Mammary epithelial cell (primary cell): ENCODE measurements at regions of chr10 and their contacts with region 1.

Region 1: GRCh38 chr10:91745074-91745832 is 53.0 kb upstream of the TNKS2 start:
- DNase-seq: peak; percentile 55
- H3K4me3 ChIP-seq: peak overlapping the region in 2 of 3 experiments; percentile 21 to 34
- H3K27ac ChIP-seq: no peak overlapping the region
- H3K4me1 ChIP-seq: peaks cover 3% of the 10 kb centered on the region
- H3K27me3 ChIP-seq: peaks cover 3% of the 10 kb centered on the region
- CTCF ChIP-seq: peak; percentile 66 to 80

Region 2: DNA sequence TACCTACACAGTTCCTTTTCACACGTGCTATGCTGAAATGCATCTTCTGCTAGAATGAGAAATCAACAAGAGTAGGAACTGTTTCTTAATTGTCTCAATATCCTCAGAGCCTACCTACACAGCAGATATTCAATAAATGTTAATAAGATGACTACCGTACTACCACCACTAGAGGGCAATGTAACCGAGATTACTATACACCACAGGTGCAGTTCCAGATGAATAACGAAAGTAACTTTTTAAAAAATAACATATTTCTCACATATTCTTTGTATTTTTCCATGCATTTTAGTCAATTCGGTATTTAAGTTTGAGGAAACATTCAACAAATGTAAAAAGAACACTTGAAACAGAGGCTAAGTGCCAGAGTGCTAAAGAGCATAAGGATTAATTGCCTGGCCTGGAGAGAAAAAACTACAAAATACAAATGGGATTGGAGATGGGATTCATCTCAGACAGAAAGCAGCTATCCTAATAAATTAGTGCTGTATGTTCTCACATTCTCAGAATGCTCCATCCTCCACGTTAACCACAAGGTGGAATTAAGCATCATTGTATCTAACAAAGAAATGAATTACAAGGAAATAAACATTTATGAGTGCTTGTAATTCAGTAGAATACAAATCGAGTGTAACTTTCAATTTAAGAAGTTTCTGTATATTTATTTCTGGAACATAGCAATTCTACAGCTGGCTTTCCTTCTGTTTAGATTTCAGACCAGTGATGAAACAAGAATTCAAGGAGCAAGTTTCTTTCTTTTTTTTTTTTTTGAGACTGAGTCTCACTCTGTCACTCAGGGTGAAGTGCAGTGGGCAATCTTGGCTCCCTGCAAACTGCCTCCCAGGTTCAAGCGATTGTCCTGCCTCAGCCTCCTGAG is 355.4 kb before region 1 on chr10:
- CTCF ChIA-PET with region 1: no interaction called
- dilution Hi-C with region 1: no loop called
- in situ Hi-C with region 1: no loop called
- intact Hi-C with region 1: loop called (anchors 2 kb)
- DNase-seq: peak; percentile 36
- H3K4me3 ChIP-seq: no peak overlapping the region
- H3K27ac ChIP-seq: no peak overlapping the region
- H3K4me1 ChIP-seq: no peaks in the 10 kb centered on the region
- H3K27me3 ChIP-seq: peaks cover 2% of the 10 kb centered on the region
- CTCF ChIP-seq: peak; percentile 54 to 55

Region 3: GRCh38 chr10:91493313-91493712 is 251.9 kb before region 1 on chr10:
- CTCF ChIA-PET with region 1: no interaction called
- dilution Hi-C with region 1: no loop called
- in situ Hi-C with region 1: loop called in 1 of 2 experiments (anchors 10 kb)
- intact Hi-C with region 1: loop called (anchors 1 kb)
- DNase-seq: peak; percentile 21
- H3K4me3 ChIP-seq: no peak overlapping the region
- H3K27ac ChIP-seq: no peak overlapping the region
- H3K4me1 ChIP-seq: no peaks in the 10 kb centered on the region
- H3K27me3 ChIP-seq: no peaks in the 10 kb centered on the region
- CTCF ChIP-seq: peak; percentile 31 to 45

Region 4: GRCh38 chr10:91551856-91552255 is 193.4 kb before region 1 on chr10:
- CTCF ChIA-PET with region 1: no interaction called
- dilution Hi-C with region 1: no loop called
- in situ Hi-C with region 1: no loop called
- intact Hi-C with region 1: loop called (anchors 1 kb)
- DNase-seq: peak; percentile 25
- H3K4me3 ChIP-seq: no peak overlapping the region
- H3K27ac ChIP-seq: no peak overlapping the region
- H3K4me1 ChIP-seq: peaks cover 17% of the 10 kb centered on the region
- H3K27me3 ChIP-seq: no peaks in the 10 kb centered on the region
- CTCF ChIP-seq: peak; percentile 37 to 58

Region 5: DNA sequence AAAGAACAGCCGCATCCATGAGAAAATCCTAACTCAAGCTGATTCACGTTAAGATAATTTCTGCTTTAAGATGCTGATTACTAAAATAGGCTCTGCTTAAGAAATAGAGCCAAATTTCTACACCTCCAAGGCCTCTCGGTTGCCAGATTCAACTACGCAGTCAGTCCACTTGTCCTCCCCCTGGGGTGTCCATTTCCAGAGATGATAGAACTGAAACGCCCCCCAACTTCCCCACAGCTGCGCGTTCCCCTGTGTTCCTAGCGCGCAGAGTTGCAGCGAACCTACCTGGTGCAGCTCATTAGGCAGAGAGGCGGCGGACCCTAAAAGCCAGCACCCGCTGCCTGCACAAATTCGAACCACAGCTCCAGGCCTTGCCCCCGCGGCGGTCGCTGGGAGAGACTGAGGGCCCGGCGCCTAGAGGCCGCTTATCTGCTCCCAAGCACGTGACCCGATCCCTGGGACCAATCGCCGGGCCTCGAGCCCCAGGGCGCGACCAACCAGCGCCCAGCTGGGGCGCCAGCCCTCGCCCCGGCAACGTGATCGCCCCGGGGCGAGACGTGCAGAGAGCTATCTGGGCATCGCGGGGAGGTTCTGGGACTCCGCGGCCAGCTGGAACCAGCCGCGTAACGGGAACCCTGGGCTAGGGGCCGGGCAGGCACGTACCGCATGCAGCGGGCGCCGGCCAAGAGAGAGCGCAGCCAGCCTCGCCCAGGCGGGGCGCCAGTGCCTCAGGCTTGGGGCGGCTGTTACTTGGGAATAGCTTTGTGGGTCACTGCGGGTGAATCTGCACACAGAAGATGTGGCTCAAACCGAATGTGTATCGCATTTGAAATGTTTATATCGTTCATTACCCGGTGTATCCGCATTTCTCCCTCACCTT is 112.3 kb before region 1 on chr10 and contains the start of gene PPP1R3C:
- CTCF ChIA-PET with region 1: no interaction called
- dilution Hi-C with region 1: no loop called
- in situ Hi-C with region 1: no loop called
- intact Hi-C with region 1: loop called (anchors 1 kb)
- DNase-seq: peak; percentile 84
- H3K4me3 ChIP-seq: peak within 1 kb of the TSS; percentile 53 to 71 (median 55)
- H3K27ac ChIP-seq: peak within 1 kb of the TSS; percentile 15
- H3K4me1 ChIP-seq: peaks cover 19% of the 10 kb centered on the region
- H3K27me3 ChIP-seq: no peaks in the 10 kb centered on the region
- CTCF ChIP-seq: peak in 1 of 2 donors; percentile 36
- total RNA-seq, gene PPP1R3C: 0.49 to 11.3 TPM

Region 6: DNA sequence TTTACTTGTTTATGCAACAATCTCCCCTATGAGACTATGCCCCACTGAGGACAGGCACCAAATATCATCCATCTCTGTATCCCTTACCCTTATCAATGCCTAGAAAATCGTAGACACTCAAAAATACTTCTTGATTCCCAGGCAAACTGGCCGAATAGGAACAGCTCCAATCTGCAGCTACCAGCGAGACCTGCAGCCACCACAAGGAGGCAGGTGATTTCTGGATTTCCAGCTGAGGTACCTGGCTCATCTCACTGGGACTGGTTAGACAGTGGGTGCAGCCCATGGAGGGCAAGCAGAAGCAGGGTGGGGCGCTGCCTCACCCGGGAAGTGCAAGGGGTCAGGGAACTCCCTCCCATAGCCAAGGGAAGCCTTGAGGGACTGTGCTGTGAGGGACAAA is 101.6 kb before region 1 on chr10:
- CTCF ChIA-PET with region 1: no interaction called
- dilution Hi-C with region 1: no loop called
- in situ Hi-C with region 1: no loop called
- intact Hi-C with region 1: loop called (anchors 1 kb)
- DNase-seq: peak; percentile 37
- H3K4me3 ChIP-seq: no peak overlapping the region
- H3K27ac ChIP-seq: no peak overlapping the region
- H3K4me1 ChIP-seq: peaks cover 12% of the 10 kb centered on the region
- H3K27me3 ChIP-seq: no peaks in the 10 kb centered on the region
- CTCF ChIP-seq: peak; percentile 53 to 64

Region 7: GRCh38 chr10:91672021-91672608 is 73.1 kb before region 1 on chr10:
- CTCF ChIA-PET with region 1: no interaction called
- dilution Hi-C with region 1: no loop called
- in situ Hi-C with region 1: no loop called
- intact Hi-C with region 1: no loop called
- DNase-seq: peak; percentile 54
- H3K4me3 ChIP-seq: no peak overlapping the region
- H3K27ac ChIP-seq: no peak overlapping the region
- H3K4me1 ChIP-seq: peaks cover 8% of the 10 kb centered on the region
- H3K27me3 ChIP-seq: no peaks in the 10 kb centered on the region
- CTCF ChIP-seq: no peak